ENCODE measurements at regions of chr6 and their contacts with region 1.

Region 1: GRCh38 chr6:31087494-31088089 is 24.8 kb downstream of the C6orf15 start:
- DNase-seq: peak; percentile 73 to 95
- ATAC-seq: peak; percentile 90 to 99 (median 99)
- H3K4me3 ChIP-seq: no peak overlapping the region
- H3K4me3 Mint-ChIP-seq: no peak overlapping the region
- H3K27ac ChIP-seq: no peak overlapping the region
- H3K27ac Mint-ChIP-seq: no peak overlapping the region
- H3K4me1 ChIP-seq: peaks cover 4% of the 10 kb centered on the region
- H3K4me1 Mint-ChIP-seq: peaks cover 0 to 10% of the 10 kb centered on the region in 2 donors
- H3K27me3 ChIP-seq: peaks cover 5% of the 10 kb centered on the region
- H3K27me3 Mint-ChIP-seq: peaks cover 2 to 12% of the 10 kb centered on the region in 2 donors
- CTCF ChIP-seq: peak; percentile 72

Region 2: GRCh38 chr6:30828027-30828960 is 259.3 kb before region 1 on chr6:
- intact Hi-C with region 1: loop called (anchors 1 kb)
- DNase-seq: peak; percentile 62 to 87
- ATAC-seq: peak; percentile 80 to 89 (median 84)
- H3K4me3 ChIP-seq: peak overlapping the region; percentile 42
- H3K4me3 Mint-ChIP-seq: peak overlapping the region; percentile 91
- H3K27ac ChIP-seq: peak overlapping the region; percentile 9
- H3K27ac Mint-ChIP-seq: peak overlapping the region in 1 of 2 donors; percentile 79
- H3K4me1 ChIP-seq: peaks cover 43% of the 10 kb centered on the region
- H3K4me1 Mint-ChIP-seq: peaks cover 6 to 50% of the 10 kb centered on the region in 2 donors
- H3K27me3 ChIP-seq: no peaks in the 10 kb centered on the region
- H3K27me3 Mint-ChIP-seq: peaks cover 0 to 20% of the 10 kb centered on the region in 2 donors
- CTCF ChIP-seq: peak; percentile 90

Region 3: DNA sequence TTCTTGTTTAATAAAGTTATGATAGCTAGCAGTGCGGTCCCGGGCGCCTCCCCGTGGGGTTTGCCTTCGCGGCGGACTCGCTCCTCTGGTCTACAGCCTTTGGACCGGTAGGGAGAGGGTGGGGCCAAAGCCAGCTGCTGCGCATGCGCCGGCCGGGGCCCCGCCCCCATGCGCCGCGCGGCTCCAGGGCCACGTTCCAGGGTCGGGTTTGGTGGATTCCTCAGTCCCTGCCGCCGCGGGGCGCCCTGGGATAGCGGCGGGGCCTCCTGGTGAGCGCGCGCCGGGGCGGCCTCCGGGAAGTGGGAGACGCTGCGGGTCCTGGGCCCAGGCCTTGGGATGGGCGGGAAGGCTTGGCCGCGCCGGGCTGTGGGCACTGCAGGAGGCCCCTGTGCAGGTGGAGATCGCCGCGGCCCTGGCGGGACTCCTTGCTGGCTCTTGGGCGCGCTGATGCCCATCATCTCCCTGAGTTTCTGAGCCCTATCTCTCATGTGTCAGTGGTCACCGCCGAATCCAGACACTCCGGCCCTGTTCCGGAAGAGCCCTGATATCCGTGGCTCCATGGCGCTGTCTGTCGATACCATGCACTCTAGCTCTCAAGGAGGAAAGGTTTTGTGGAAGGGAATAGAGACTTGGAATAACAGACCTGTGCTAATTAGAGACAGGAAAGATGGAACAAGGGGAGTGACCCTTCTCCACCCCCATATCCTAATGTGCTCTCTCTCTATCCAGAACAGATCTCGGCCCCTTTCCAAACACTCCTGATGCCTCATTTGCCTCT is 173.3 kb before region 1 on chr6 and contains the start of gene VARS2:
- intact Hi-C with region 1: loop called (anchors 10 kb)
- DNase-seq: peak; percentile 82 to 93
- ATAC-seq: peak; percentile 94 to 96 (median 96)
- H3K4me3 ChIP-seq: peak within 1 kb of the TSS; percentile 65
- H3K4me3 Mint-ChIP-seq: peak within 1 kb of the TSS; percentile 93
- H3K27ac ChIP-seq: peak within 1 kb of the TSS; percentile 11
- H3K27ac Mint-ChIP-seq: peak within 1 kb of the TSS; percentile 73 to 85
- H3K4me1 ChIP-seq: peaks cover 14% of the 10 kb centered on the region
- H3K4me1 Mint-ChIP-seq: peaks cover 16 to 33% of the 10 kb centered on the region in 2 donors
- H3K27me3 ChIP-seq: no peaks in the 10 kb centered on the region
- H3K27me3 Mint-ChIP-seq: no peaks in the 10 kb centered on the region
- CTCF ChIP-seq: no peak
- total RNA-seq, gene VARS2: 16.9 to 36.7 (median 24.5) TPM

Region 4: DNA sequence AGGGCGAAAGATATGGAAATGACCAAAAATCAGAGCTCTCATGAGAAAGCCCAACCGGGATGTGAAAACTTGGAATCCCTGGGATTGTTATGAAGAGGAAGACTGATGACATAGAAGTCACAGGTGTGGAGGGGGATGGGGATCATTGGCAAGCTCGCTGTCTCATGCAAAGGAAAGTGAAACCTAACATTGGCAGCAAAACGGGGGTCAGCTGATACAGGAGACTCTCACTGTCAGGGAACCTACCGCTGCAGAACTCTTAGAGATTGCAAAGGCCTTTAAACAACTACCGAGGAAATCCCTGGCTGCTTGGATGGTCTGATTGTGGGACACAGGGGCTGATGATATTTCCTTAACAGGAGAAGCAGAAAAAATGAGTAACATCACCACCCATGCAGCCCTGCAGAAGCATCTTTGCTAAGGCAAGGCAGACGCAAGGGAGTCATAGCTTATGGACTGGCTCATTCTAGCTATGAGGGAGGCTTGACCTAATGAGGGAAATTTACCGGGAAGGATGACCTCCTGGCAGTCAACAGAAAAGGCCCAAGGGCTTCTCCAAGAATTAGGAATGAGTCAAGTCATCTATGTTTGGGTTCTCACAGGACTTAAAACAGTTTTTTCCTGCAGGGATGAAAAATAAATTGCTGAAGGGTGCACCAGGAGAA is 97.0 kb before region 1 on chr6:
- intact Hi-C with region 1: no loop called
- DNase-seq: peak in 1 of 2 donors; percentile 55
- ATAC-seq: peak in 1 of 3 donors; percentile 38
- H3K4me3 ChIP-seq: no peak overlapping the region
- H3K4me3 Mint-ChIP-seq: peak overlapping the region; percentile 35
- H3K27ac ChIP-seq: no peak overlapping the region
- H3K27ac Mint-ChIP-seq: no peak overlapping the region
- H3K4me1 ChIP-seq: no peaks in the 10 kb centered on the region
- H3K4me1 Mint-ChIP-seq: peaks cover 0 to 7% of the 10 kb centered on the region in 2 donors
- H3K27me3 ChIP-seq: no peaks in the 10 kb centered on the region
- H3K27me3 Mint-ChIP-seq: peaks cover 0 to 4% of the 10 kb centered on the region in 2 donors
- CTCF ChIP-seq: no peak

Measured in natural killer cell (primary cell).